Activated B cell treated with CpG ODN at 0.5 μM for 24 hours (primary cell): ENCODE measurements at regions of chr15 and their contacts with region 1.

Region 1: GRCh38 chr15:64893481-64894394 is 18.0 kb upstream of the ANKDD1A start:
- DNase-seq: peak; percentile 90
- ATAC-seq: peak; percentile 72
- H3K4me3 Mint-ChIP-seq: peak overlapping the region; percentile 89
- H3K27ac Mint-ChIP-seq: peak overlapping the region; percentile 99
- H3K4me1 Mint-ChIP-seq: peaks cover 76% of the 10 kb centered on the region
- H3K27me3 Mint-ChIP-seq: no peaks in the 10 kb centered on the region
- CTCF ChIP-seq: no peak

Region 2: GRCh38 chr15:64387562-64388168 is 506.1 kb before region 1 on chr15 and contains the start of gene TRIP4:
- CTCF ChIA-PET with region 1: no interaction called
- POLR2A ChIA-PET with region 1: interaction called, 11 read pairs
- intact Hi-C with region 1: no loop called
- DNase-seq: peak; percentile 92
- ATAC-seq: peak; percentile 100
- H3K4me3 Mint-ChIP-seq: peak within 1 kb of the TSS; percentile 98
- H3K27ac Mint-ChIP-seq: peak within 1 kb of the TSS; percentile 94
- H3K4me1 Mint-ChIP-seq: peaks cover 25% of the 10 kb centered on the region
- H3K27me3 Mint-ChIP-seq: no peaks in the 10 kb centered on the region
- CTCF ChIP-seq: no peak
- total RNA-seq, gene TRIP4: 26.3 and 35.0 TPM in 2 replicates

Region 3: DNA sequence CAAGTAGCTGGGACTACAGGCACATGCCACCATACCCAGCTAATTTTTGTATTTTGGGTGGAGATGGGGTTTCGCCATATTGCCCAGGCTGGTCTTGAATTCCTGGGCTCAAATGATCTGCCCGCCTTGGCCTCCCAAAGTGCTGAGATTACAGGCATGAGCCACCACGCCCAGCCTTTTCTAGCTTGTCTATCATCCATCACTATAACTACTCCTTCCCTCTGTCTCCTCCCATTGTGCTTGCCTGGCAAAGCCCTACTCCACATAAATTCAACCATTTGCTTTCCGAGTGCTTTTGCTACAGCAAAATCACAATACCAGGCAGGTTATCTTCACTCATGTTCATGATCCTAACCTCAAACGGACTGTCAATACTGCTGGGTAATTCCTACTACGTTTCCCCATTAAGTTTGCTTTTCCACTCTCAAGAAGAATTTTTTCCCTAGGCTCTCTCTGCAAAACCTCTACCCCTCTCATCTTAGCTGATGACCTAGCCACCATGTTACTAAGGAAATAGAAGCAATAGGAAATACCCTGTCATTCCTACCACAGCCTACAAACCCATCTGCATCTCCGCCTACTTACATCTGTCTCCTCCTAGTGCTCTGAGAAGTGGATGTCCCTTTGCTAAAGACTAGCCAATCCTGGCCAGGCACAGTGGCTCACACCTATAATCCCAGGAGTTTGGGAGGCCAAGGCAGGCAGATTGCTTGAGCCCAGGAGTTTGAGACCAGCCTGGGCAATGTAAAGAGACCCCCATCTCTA is 182.9 kb before region 1 on chr15:
- CTCF ChIA-PET with region 1: no interaction called
- POLR2A ChIA-PET with region 1: no interaction called
- intact Hi-C with region 1: no loop called
- DNase-seq: no peak
- ATAC-seq: no peak
- H3K4me3 Mint-ChIP-seq: no peak overlapping the region
- H3K27ac Mint-ChIP-seq: no peak overlapping the region
- H3K4me1 Mint-ChIP-seq: no peaks in the 10 kb centered on the region
- H3K27me3 Mint-ChIP-seq: peaks cover 2% of the 10 kb centered on the region
- CTCF ChIP-seq: no peak

Region 4: DNA sequence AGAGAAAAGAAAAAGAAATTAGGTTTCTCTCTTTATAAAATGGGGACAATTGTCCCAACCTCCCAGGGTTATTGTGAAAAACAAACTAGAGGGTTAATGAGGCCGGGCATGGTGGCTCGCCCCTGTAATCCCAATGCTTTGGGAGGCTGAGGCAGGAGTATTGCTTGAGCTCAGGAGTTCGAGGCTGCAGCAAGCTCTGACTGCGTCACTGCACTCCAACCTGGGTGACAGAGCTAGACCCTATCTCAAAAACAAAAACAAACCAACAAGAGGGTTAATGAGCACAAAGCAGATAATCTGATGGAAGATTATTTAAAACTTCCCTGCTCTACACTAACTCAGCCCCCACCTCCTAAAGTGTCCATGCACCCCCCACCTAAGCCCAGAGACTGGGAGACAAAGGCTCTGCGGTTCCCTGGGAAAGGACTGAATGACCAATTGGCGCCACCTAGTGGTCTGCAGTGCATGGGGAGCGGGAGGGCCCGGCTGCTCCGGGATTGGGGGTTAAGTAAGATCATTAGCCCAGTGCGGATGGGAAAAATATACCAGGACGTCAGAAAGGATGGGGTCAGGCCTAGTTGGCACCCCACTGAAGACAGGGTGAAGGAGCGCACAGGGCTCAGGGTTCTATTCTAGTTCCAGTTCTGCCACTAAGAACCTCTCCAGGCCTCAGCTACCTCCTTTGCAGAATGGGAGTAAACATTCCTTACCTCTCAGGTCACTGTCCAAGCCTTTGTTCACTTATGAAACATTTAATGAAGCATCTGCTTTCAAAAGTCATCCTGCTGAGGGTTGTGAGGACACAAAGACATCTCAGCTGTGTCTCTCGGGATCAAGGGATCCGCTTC is 83.9 kb before region 1 on chr15:
- CTCF ChIA-PET with region 1: interaction called, 36 read pairs
- POLR2A ChIA-PET with region 1: interaction called, 51 read pairs
- intact Hi-C with region 1: loop called (anchors 1 kb)
- DNase-seq: peak; percentile 61
- ATAC-seq: peak; percentile 43
- H3K4me3 Mint-ChIP-seq: no peak overlapping the region
- H3K27ac Mint-ChIP-seq: no peak overlapping the region
- H3K4me1 Mint-ChIP-seq: peaks cover 25% of the 10 kb centered on the region
- H3K27me3 Mint-ChIP-seq: no peaks in the 10 kb centered on the region
- CTCF ChIP-seq: peak; percentile 90

Region 5: GRCh38 chr15:64841258-64842095 is 52.3 kb before region 1 on chr15 and contains the start of gene PLEKHO2:
- CTCF ChIA-PET with region 1: interaction called, 30 read pairs
- POLR2A ChIA-PET with region 1: interaction called, 138 read pairs
- intact Hi-C with region 1: loop called (anchors 1 kb)
- DNase-seq: peak; percentile 78
- ATAC-seq: peak; percentile 75
- H3K4me3 Mint-ChIP-seq: peak within 1 kb of the TSS; percentile 95
- H3K27ac Mint-ChIP-seq: peak within 1 kb of the TSS; percentile 75
- H3K4me1 Mint-ChIP-seq: peaks cover 53% of the 10 kb centered on the region
- H3K27me3 Mint-ChIP-seq: no peaks in the 10 kb centered on the region
- CTCF ChIP-seq: no peak
- total RNA-seq, gene PLEKHO2: 36.5 and 38.1 TPM in 2 replicates

Region 6: GRCh38 chr15:64905119-64905831 is 11.5 kb after region 1 on chr15:
- CTCF ChIA-PET with region 1: interaction called, 32 read pairs
- POLR2A ChIA-PET with region 1: interaction called, 74 read pairs
- intact Hi-C with region 1: loop called (anchors 1 kb)
- DNase-seq: peak; percentile 78
- ATAC-seq: peak; percentile 98
- H3K4me3 Mint-ChIP-seq: peak overlapping the region; percentile 82
- H3K27ac Mint-ChIP-seq: peak overlapping the region; percentile 66
- H3K4me1 Mint-ChIP-seq: peaks cover 41% of the 10 kb centered on the region
- H3K27me3 Mint-ChIP-seq: peaks cover 2% of the 10 kb centered on the region
- CTCF ChIP-seq: peak; percentile 59

Region 7: DNA sequence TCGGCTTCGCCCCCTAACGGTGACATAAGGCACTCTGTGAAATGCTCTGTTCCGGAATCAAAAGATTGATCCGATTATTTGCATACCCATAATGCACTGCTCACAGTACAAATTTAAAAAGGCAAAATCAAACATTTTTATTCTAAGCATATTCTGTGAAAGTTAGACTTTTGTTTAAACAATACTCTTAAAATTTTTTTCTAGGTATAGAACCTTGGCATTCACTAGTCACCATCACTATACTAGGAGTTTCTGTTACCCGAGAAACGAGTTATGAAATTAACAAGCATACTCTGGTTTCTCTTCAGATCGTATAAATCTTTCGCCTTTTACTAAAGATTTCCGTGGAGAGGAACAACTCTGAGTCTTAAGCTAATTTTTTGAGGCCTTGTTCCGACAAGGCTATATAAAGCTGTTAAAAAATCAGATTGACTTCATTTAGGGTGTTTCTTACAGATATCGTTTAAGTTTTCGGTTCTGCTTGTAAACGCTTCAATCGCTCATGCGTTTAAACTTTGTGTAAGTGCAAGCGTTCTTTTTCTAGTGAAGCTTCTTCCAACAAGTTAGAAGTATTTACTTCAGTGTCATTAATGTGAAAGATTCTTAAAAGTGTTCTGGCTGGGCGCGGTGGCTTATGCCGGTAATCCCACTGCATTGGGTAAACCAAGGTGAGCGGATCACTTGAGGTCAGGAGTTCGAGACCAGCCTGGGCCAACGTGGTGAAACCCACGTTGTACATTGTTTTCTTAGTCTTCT is 410.8 kb after region 1 on chr15 and contains the start of gene RNU5B-1:
- CTCF ChIA-PET with region 1: no interaction called
- POLR2A ChIA-PET with region 1: interaction called, 18 read pairs
- intact Hi-C with region 1: no loop called
- DNase-seq: peak; percentile 71
- ATAC-seq: peak; percentile 78
- H3K4me3 Mint-ChIP-seq: peak within 1 kb of the TSS; percentile 96
- H3K27ac Mint-ChIP-seq: peak within 1 kb of the TSS; percentile 97
- H3K4me1 Mint-ChIP-seq: peaks cover 37% of the 10 kb centered on the region
- H3K27me3 Mint-ChIP-seq: no peaks in the 10 kb centered on the region
- CTCF ChIP-seq: no peak
- total RNA-seq, gene RNU5B-1: 32.5 TPM in 1 of 2 replicates, not detected in the other